Right ventricle myocardium superior (tissue), 1 donor: ENCODE measurements at regions of chr3 and their contacts with region 1.

Region 1: GRCh38 chr3:133573054-133573628 is 345 bp upstream of the CDV3 start:
- DNase-seq: peak; percentile 100
- ATAC-seq: peak; percentile 95

Region 2: DNA sequence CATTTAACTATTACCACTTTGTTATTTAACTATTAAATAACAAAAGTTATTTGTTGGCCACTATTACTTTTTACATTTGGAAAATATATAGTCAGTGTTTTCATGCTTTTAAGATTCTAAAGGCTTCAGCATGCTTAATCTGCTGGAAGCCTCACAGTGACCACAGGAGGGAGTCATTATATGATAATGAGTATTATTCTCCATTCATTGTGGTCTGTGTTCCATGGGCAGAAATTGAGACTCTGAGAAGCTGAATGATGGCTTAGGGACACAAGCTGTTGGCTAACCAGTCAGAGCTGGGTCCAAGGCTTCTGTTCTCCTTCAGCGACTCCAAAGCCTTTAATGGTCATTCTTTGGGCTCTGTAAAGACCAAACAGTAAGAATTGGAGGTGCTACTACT is 108.6 kb before region 1 on chr3:
- intact Hi-C with region 1: loop called (anchors 10 kb)
- DNase-seq: no peak
- ATAC-seq: no peak